AG04450 (cell line): ENCODE measurements at regions of chr15 and their contacts with region 1.

Region 1: GRCh38 chr15:89057504-89058133 is 30.6 kb upstream of the ABHD2 start:
- DNase-seq: peak; percentile 43
- H3K4me3 ChIP-seq: no peak overlapping the region
- H3K27ac ChIP-seq: no peak overlapping the region
- H3K27me3 ChIP-seq: no peaks in the 10 kb centered on the region
- CTCF ChIP-seq: peak; percentile 99

Region 2: GRCh38 chr15:88897456-88898194 is 160.0 kb before region 1 on chr15:
- CTCF ChIA-PET with region 1: interaction called, 38 read pairs
- POLR2A ChIA-PET with region 1: no interaction called
- DNase-seq: no peak
- H3K4me3 ChIP-seq: no peak overlapping the region
- H3K27ac ChIP-seq: peak overlapping the region; percentile 1
- H3K27me3 ChIP-seq: no peaks in the 10 kb centered on the region
- CTCF ChIP-seq: peak; percentile 76

Region 3: GRCh38 chr15:89068325-89068784 is 10.7 kb after region 1 on chr15:
- CTCF ChIA-PET with region 1: interaction called, 17 read pairs
- POLR2A ChIA-PET with region 1: no interaction called
- DNase-seq: peak; percentile 87
- H3K4me3 ChIP-seq: no peak overlapping the region
- H3K27ac ChIP-seq: peak overlapping the region; percentile 57
- H3K27me3 ChIP-seq: no peaks in the 10 kb centered on the region
- CTCF ChIP-seq: no peak

Region 4: GRCh38 chr15:89101302-89102191 is 43.9 kb after region 1 on chr15:
- CTCF ChIA-PET with region 1: interaction called, 17 read pairs
- POLR2A ChIA-PET with region 1: interaction called, 7 read pairs
- DNase-seq: peak; percentile 97
- H3K4me3 ChIP-seq: no peak overlapping the region
- H3K27ac ChIP-seq: peak overlapping the region; percentile 97
- H3K27me3 ChIP-seq: no peaks in the 10 kb centered on the region
- CTCF ChIP-seq: no peak

Region 5: GRCh38 chr15:89123181-89123525 is 65.5 kb after region 1 on chr15:
- CTCF ChIA-PET with region 1: interaction called, 52 read pairs
- POLR2A ChIA-PET with region 1: no interaction called
- DNase-seq: no peak
- H3K4me3 ChIP-seq: no peak overlapping the region
- H3K27ac ChIP-seq: no peak overlapping the region
- H3K27me3 ChIP-seq: no peaks in the 10 kb centered on the region
- CTCF ChIP-seq: no peak

Region 6: DNA sequence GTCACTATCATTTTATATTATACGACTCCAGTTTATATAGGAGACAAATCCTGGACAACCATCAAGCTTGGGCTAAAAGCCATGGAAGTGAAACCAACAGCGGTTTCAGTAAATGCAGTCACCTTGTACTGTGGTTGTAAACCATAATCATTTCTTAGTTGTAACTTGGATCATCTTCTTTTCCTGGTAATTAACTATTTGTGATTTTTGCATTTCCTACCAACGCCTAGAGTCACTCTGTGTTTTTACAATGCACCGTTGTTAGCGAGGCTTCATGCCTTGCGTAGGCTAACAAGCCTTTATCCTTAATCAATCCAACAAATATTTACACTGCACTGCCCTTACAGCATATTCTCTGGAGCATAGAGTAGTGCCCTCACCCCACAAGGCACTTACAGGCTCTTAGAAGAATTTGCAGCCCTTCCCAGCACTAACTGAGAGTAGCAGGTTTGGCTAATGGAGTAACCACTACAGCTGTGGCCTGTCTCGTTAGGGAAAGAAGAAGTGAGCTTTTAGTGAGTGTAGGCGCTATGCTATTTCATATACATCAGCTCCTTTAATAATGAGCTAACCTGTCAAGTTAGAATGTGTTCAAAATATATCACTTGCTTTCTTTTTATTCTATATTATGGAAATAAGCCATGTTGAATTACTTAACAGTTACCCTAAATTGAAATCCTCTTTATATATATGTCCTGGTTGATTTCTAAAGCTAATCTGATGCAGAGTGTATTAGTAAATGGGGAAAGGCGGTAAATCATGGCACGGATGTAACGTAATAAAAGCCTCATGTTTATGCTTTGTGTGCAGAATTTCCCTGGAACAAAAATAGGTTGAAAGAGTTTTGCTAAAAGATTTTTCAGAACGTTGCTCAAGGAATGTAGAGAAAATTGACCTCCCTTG is 93.4 kb after region 1 on chr15:
- CTCF ChIA-PET with region 1: interaction called, 26 read pairs
- POLR2A ChIA-PET with region 1: no interaction called
- DNase-seq: no peak
- H3K4me3 ChIP-seq: no peak overlapping the region
- H3K27ac ChIP-seq: no peak overlapping the region
- H3K27me3 ChIP-seq: no peaks in the 10 kb centered on the region
- CTCF ChIP-seq: no peak

Region 7: DNA sequence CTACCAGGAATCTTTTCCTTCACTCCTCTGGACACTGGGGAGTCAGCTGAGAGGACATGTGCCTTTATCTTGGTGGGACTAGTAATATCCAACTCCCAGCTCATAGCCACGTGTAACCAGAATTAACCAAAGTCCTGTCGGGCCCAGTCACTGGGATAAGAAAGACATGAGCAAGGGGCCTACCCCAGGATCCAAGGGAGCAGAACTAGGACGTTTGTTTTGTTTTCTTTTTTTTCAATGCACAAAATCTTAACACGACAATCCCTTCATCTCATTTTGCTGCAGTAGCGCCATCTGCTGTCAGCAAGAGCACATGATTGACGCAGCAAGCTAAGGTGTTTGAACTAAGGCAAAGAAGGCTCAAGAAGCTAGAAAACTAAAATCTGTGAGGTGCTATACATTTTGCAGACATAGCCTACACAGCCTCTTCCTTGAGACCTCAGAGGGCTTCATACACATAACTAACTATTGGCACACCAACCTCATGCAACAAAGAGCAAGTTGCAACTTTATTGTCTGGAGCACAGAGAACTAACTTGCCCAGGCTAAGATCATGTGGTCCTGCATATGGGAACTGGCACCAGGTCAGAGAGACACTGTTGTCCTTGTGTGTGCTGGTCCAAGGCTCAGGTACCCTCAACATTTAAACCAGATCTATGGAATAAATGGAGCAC is 120.2 kb after region 1 on chr15:
- CTCF ChIA-PET with region 1: interaction called, 222 read pairs
- POLR2A ChIA-PET with region 1: no interaction called
- DNase-seq: peak; percentile 57
- H3K4me3 ChIP-seq: no peak overlapping the region
- H3K27ac ChIP-seq: no peak overlapping the region
- H3K27me3 ChIP-seq: no peaks in the 10 kb centered on the region
- CTCF ChIP-seq: peak; percentile 88